ENCODE measurements at regions of chr17 and their contacts with region 1.

Region 1: GRCh38 chr17:30477083-30477773 is at the start of gene GOSR1:
- DNase-seq: peak; percentile 84 to 97 (median 90)
- ATAC-seq: peak; percentile 97
- H3K4me3 ChIP-seq: peak within 1 kb of the TSS; percentile 56
- H3K4me3 Mint-ChIP-seq: peak within 1 kb of the TSS; percentile 97
- H3K27ac ChIP-seq: peak within 1 kb of the TSS; percentile 71 to 99
- H3K27ac Mint-ChIP-seq: peak within 1 kb of the TSS; percentile 94
- H3K4me1 ChIP-seq: peaks cover 13% of the 10 kb centered on the region
- H3K4me1 Mint-ChIP-seq: peaks cover 48% of the 10 kb centered on the region
- H3K27me3 ChIP-seq: peaks cover 0 to 5% of the 10 kb centered on the region in 2 experiments
- H3K27me3 Mint-ChIP-seq: no peaks in the 10 kb centered on the region
- CTCF ChIP-seq: peak; percentile 73
- total RNA-seq, gene GOSR1: 43.2 to 45.6 TPM

Region 2: DNA sequence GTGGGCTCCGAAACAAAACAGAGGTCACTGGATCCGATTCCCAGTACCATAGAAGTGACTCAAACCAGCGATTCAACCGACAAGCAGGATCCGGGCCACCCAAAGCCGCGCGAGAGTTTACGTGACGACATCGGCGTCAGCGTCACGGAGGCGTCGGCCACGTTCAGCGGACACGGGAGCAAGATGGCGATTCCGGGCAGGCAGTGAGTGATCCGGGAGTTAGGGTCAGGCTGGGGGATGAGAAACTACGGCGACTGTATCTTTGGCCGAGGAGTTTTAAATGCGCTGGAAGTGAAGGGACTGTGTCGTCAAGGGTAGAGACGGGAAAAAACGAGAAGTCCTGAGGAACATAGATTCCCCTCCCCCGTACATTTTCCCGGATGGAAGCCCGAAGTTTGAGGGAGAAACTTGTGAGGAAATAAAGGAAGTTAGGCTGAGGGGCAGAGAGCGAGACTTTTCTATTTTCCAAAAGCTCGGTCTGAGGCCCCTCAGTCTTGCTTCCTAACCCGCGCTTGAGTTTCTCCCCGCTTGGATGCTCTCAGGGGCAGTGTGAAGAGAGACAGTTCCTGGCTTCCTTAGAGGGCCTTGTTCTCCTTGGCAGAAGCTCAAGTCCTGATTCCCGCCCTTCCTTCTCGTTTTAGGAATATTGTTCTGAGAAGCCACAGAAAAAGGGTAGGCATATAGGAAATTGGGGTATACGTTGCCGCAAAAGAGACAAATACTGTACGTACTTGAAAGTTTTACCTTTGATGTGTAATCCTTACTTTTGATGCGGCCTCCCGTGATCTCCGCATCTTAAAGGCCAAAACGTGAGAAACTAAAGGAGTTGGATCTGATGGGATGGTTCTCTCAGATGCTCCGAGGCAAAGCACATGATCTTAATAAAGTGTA is 360.3 kb before region 1 on chr17 and contains the start of gene NSRP1:
- CTCF ChIA-PET with region 1: interaction called, 3 read pairs
- POLR2A ChIA-PET with region 1: no interaction called
- intact Hi-C with region 1: loop called in 1 of 2 experiments (anchors 5 kb)
- DNase-seq: peak; percentile 85 to 96 (median 90)
- ATAC-seq: peak; percentile 97
- H3K4me3 ChIP-seq: peak within 1 kb of the TSS; percentile 97
- H3K4me3 Mint-ChIP-seq: peak within 1 kb of the TSS; percentile 97
- H3K27ac ChIP-seq: peak within 1 kb of the TSS; percentile 85 to 99
- H3K27ac Mint-ChIP-seq: peak within 1 kb of the TSS; percentile 95
- H3K4me1 ChIP-seq: peaks cover 21% of the 10 kb centered on the region
- H3K4me1 Mint-ChIP-seq: peaks cover 45% of the 10 kb centered on the region
- H3K27me3 ChIP-seq: no peaks in the 10 kb centered on the region
- H3K27me3 Mint-ChIP-seq: no peaks in the 10 kb centered on the region
- CTCF ChIP-seq: no peak
- total RNA-seq, gene NSRP1: 23.8 to 25.2 TPM

Region 3: DNA sequence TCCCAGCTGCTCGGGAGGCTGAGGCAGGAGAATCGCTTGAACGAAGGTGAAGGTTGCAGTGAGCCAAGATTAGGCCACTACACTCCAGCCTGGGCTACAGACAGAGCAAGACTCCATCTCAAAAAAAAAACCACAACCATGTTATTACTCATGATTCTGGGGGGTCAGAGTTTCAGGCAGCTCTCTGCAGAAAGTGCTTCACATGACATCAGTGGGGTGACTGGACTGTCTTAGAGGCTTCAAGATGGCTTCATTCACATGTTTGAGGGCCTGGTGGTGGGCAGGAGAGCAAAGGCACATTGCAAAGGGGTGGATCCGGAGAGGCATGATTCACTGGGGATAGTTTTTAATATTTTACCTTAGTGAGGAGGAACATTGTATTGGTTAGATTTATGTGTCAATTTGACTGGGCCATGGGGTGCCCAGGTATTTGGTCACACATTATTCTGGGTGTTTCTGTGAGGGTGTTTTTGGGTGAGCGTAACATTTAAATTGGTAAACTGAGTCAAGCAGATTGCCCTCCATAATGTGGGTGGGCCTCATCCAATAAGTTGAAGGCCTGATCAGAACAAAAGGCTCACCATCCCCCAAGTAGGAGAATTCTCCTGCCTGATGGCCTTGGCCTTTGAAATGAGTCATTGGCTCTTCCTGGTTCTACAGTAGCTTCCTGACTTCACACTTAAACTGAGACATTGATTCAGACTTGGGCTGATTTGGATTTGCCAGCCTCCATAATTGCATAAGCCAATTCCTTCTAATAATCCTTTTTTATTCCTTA is 109.8 kb after region 1 on chr17:
- CTCF ChIA-PET with region 1: no interaction called
- POLR2A ChIA-PET with region 1: no interaction called
- intact Hi-C with region 1: no loop called
- DNase-seq: no peak
- ATAC-seq: no peak
- H3K4me3 ChIP-seq: no peak overlapping the region
- H3K4me3 Mint-ChIP-seq: no peak overlapping the region
- H3K27ac ChIP-seq: no peak overlapping the region
- H3K27ac Mint-ChIP-seq: no peak overlapping the region
- H3K4me1 ChIP-seq: no peaks in the 10 kb centered on the region
- H3K4me1 Mint-ChIP-seq: no peaks in the 10 kb centered on the region
- H3K27me3 ChIP-seq: no peaks in the 10 kb centered on the region
- H3K27me3 Mint-ChIP-seq: no peaks in the 10 kb centered on the region
- CTCF ChIP-seq: no peak

Region 4: DNA sequence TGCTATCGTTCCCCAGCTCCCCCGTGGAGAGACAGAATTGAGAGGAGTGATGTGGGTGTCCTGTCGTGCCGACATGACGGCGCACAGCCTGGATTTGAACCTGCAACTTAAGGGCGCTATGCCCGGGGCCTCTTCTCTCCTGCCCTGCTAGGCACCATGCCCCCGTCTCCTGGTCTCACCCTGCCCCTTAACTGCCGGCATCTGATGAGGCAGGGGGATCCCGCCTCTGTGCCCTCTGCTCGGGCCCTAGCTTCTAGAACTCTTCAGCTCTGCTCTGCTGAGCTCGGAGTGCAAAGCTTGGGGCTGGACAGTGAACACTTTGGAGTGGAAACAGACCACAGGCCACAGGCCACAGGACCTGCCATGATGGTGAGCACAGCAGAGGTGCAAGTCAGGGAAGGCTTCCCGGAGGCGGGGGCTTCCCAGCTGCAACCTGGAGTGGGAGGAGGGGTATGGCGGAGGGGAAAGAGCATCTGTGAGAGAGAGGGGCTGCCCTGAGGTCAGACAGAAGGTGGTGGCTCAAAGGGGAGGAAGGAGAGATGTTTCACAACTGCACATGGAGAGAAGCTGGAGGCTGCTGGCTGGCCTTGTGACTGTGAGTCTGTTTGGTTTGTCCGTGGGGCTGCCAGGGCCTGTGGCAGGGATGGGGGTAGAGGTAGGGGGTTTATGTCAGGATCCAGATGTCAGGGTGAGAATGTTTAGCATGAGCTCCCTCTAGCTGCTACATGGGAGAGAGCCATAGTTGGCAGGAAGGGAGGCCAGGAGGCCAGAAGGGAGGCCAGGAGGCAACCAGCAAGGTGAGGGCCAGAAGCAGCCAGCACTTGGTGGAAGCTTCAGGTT is 239.5 kb after region 1 on chr17:
- CTCF ChIA-PET with region 1: no interaction called
- POLR2A ChIA-PET with region 1: no interaction called
- intact Hi-C with region 1: loop called (anchors 1 to 10 kb)
- DNase-seq: peak in 1 of 14 experiments; percentile 2
- ATAC-seq: no peak
- H3K4me3 ChIP-seq: no peak overlapping the region
- H3K4me3 Mint-ChIP-seq: no peak overlapping the region
- H3K27ac ChIP-seq: no peak overlapping the region
- H3K27ac Mint-ChIP-seq: no peak overlapping the region
- H3K4me1 ChIP-seq: peaks cover 11% of the 10 kb centered on the region
- H3K4me1 Mint-ChIP-seq: peaks cover 12% of the 10 kb centered on the region
- H3K27me3 ChIP-seq: no peaks in the 10 kb centered on the region
- H3K27me3 Mint-ChIP-seq: no peaks in the 10 kb centered on the region
- CTCF ChIP-seq: no peak

Region 5: GRCh38 chr17:30906101-30906911 is 429.1 kb after region 1 on chr17 and contains the start of gene TEFM:
- CTCF ChIA-PET with region 1: no interaction called
- POLR2A ChIA-PET with region 1: no interaction called
- intact Hi-C with region 1: loop called in 1 of 2 experiments (anchors 10 kb)
- DNase-seq: peak; percentile 75 to 92 (median 86)
- ATAC-seq: peak; percentile 93
- H3K4me3 ChIP-seq: peak within 1 kb of the TSS; percentile 89
- H3K4me3 Mint-ChIP-seq: peak within 1 kb of the TSS; percentile 89
- H3K27ac ChIP-seq: peak within 1 kb of the TSS; percentile 73 to 84
- H3K27ac Mint-ChIP-seq: peak within 1 kb of the TSS; percentile 86
- H3K4me1 ChIP-seq: peaks cover 24% of the 10 kb centered on the region
- H3K4me1 Mint-ChIP-seq: peaks cover 56% of the 10 kb centered on the region
- H3K27me3 ChIP-seq: no peaks in the 10 kb centered on the region
- H3K27me3 Mint-ChIP-seq: no peaks in the 10 kb centered on the region
- CTCF ChIP-seq: no peak
- total RNA-seq, gene TEFM: 7.8 to 8.9 TPM